ENCODE measurements at regions of chr17 and their contacts with region 1.

Region 1: GRCh38 chr17:12180644-12181261 is 160.1 kb downstream of the MAP2K4 start:
- DNase-seq: peak in 4 of 9 donors; percentile 0 to 8 (median 2)
- ATAC-seq: no peak
- H3K4me3 ChIP-seq: no peak overlapping the region
- H3K4me3 Mint-ChIP-seq: no peak overlapping the region
- H3K27ac ChIP-seq: no peak overlapping the region
- H3K27ac Mint-ChIP-seq: peak overlapping the region in 1 of 9 donors; percentile 4
- H3K4me1 ChIP-seq: no peaks in the 10 kb centered on the region
- H3K4me1 Mint-ChIP-seq: no peaks in the 10 kb centered on the region
- H3K27me3 ChIP-seq: no peaks in the 10 kb centered on the region
- H3K27me3 Mint-ChIP-seq: no peaks in the 10 kb centered on the region

Region 2: GRCh38 chr17:13002766-13003451 is 822.2 kb after region 1 on chr17:
- CTCF ChIA-PET with region 1: no interaction called
- POLR2A ChIA-PET with region 1: no interaction called
- intact Hi-C with region 1: loop called in 1 of 2 experiments (anchors 5 kb)
- DNase-seq: peak in 6 of 9 donors; percentile 9 to 32 (median 22)
- ATAC-seq: peak; percentile 64
- H3K4me3 ChIP-seq: no peak overlapping the region
- H3K4me3 Mint-ChIP-seq: no peak overlapping the region
- H3K27ac ChIP-seq: no peak overlapping the region
- H3K27ac Mint-ChIP-seq: no peak overlapping the region
- H3K4me1 ChIP-seq: no peaks in the 10 kb centered on the region
- H3K4me1 Mint-ChIP-seq: peaks cover 0 to 11% (median 5%) of the 10 kb centered on the region in 7 donors
- H3K27me3 ChIP-seq: no peaks in the 10 kb centered on the region
- H3K27me3 Mint-ChIP-seq: no peaks in the 10 kb centered on the region